Mammary epithelial cell (primary cell): ENCODE measurements at regions of chr12 and their contacts with region 1.

Region 1: GRCh38 chr12:57865090-57865751 is 18.7 kb upstream of the CTDSP2 start:
- DNase-seq: peak; percentile 74
- H3K4me3 ChIP-seq: peak overlapping the region; percentile 42 to 55 (median 48)
- H3K27ac ChIP-seq: peak overlapping the region; percentile 72
- H3K4me1 ChIP-seq: peaks cover 22% of the 10 kb centered on the region
- H3K27me3 ChIP-seq: no peaks in the 10 kb centered on the region
- CTCF ChIP-seq: no peak

Region 2: DNA sequence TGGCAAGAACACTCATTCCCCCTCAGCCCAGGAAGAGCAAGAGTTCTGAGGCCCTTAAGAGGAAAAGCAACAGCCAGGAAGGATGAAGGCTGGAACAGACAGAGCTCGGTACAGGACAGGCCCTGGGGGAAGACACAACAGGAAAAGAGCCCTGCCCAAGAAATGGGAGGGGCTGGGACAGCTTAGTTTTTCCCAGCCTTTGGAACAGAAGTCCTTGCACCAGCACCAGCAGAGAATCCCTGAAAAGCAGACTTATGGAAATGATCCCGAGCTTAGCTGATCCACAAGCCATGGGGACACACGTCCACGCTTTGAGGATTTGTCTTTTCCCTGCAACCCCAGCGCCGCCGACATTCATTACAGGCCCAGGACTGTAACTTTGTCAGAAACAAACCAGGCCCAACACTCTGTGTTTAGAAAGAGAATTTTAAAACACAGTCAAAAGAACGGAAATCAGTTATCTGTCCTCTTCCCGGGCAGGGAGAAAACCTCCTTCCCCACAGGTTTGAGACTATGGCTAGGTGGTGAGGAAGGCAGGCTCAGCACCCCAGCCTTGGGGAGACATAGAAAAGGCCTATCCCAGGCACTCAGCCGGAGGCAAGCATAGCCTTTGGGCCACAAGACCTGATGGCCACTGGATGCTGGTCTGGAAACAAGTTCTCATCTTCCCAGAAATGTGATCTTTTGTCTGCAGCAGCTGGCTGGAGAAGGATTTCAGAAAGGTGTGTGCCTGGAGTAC is 42.7 kb before region 1 on chr12:
- CTCF ChIA-PET with region 1: no interaction called
- dilution Hi-C with region 1: no loop called
- in situ Hi-C with region 1: no loop called
- intact Hi-C with region 1: no loop called
- DNase-seq: no peak
- H3K4me3 ChIP-seq: no peak overlapping the region
- H3K27ac ChIP-seq: no peak overlapping the region
- H3K4me1 ChIP-seq: no peaks in the 10 kb centered on the region
- H3K27me3 ChIP-seq: no peaks in the 10 kb centered on the region
- CTCF ChIP-seq: no peak

Region 3: GRCh38 chr12:57888409-57889157 is 23.4 kb after region 1 on chr12:
- CTCF ChIA-PET with region 1: no interaction called
- dilution Hi-C with region 1: no loop called
- in situ Hi-C with region 1: no loop called
- intact Hi-C with region 1: loop called (anchors 2 kb)
- DNase-seq: peak; percentile 98
- H3K4me3 ChIP-seq: peak overlapping the region in 2 of 3 experiments; percentile 11 to 28
- H3K27ac ChIP-seq: peak overlapping the region; percentile 71
- H3K4me1 ChIP-seq: peaks cover 38% of the 10 kb centered on the region
- H3K27me3 ChIP-seq: no peaks in the 10 kb centered on the region
- CTCF ChIP-seq: no peak

Region 4: DNA sequence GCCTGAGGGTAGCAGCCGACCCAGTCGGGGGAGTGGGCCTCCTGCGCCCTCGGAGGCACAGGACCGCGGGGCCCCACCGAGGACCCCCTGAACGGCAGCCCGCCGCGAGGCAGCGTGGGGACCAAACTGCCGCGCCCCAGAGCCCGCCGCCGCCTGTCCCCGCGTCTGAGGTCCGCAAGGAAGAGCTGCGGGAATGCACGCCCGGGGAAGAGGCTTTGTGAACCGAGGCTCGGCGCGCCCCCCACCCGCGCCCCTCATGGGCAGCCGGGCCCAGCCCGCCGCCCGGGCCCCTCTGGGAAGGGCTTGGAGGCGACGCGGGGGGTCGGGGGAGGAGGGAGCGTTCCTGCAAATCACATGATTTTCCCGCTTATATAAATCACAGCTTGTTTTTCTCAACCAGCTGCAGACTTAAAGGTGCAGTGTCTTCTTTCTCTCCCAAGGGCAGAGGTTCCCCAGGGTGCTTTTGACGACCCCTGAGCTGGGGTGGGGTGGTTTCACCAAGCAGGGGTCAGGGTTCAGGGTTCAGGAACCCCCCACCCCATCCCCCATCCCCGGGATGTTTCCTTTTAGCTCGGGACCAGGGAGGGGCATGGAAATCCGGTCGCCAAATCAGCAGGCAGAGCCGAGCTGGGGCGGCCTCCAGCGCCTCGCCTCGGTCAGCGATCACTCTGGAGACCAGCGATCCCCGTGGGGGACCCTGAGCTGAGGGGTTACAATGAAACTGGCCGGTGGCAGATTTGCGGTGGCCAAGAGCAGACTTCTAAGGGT is 31.4 kb after region 1 on chr12:
- CTCF ChIA-PET with region 1: no interaction called
- dilution Hi-C with region 1: no loop called
- in situ Hi-C with region 1: no loop called
- intact Hi-C with region 1: loop called (anchors 2 kb)
- DNase-seq: no peak
- H3K4me3 ChIP-seq: peak overlapping the region; percentile 45 to 50 (median 47)
- H3K27ac ChIP-seq: peak overlapping the region; percentile 19
- H3K4me1 ChIP-seq: peaks cover 48% of the 10 kb centered on the region
- H3K27me3 ChIP-seq: no peaks in the 10 kb centered on the region
- CTCF ChIP-seq: peak in 1 of 2 donors; percentile 46

Region 5: GRCh38 chr12:58765653-58766512 is 900.7 kb after region 1 on chr12:
- CTCF ChIA-PET with region 1: no interaction called
- dilution Hi-C with region 1: no loop called
- in situ Hi-C with region 1: no loop called
- intact Hi-C with region 1: no loop called
- DNase-seq: no peak
- H3K4me3 ChIP-seq: no peak overlapping the region
- H3K27ac ChIP-seq: no peak overlapping the region
- H3K4me1 ChIP-seq: no peaks in the 10 kb centered on the region
- H3K27me3 ChIP-seq: no peaks in the 10 kb centered on the region
- CTCF ChIP-seq: no peak